IMR-90 (cell line): ENCODE measurements at regions of chr1 and their contacts with region 1.

Region 1: DNA sequence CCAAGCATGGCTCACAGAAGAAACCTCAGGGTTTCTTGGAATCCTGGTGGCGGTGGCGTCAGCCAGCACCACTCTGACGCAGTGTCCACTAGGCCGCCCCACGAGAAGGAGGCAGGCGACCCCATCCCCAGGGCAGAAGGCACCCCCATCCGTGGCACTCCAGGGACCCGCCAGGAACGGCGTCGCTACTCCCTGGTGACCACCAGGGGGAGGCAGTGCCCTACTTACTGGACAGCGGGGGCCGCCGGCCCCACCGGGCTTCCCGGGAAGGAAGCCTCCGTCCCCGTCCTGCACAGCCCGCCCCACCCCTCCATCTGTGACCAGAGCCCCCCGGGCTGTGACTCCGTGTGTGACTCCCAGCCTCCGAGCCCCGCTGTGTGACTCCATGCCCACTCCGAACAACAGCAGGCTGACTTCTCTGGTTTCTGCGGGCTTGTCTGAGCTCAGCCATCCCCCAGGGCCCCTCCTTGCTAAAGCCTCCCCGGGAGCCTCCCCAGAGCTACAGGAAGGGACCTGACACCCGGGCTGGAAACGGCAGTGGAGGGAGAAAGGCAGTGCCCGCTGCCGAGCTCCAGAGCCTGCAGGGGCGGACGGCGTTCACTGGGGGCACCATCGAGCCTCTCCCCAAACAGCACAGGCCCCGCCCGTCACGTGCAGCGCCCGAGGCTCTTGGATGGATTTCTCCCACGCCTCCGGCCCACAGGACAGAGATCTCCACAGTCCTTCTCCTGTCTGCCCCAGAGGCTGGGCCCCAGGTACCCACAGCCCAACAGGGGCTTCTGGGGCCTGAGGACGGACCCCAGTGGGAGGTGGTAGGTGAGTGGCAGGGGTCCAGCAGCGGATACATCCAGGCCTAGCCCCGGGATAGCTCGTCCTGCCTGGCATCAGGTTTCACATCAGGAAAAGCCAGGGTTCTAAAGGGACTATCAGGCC is 21.1 kb downstream of the KIF17 start:
- DNase-seq: peak; percentile 94
- ATAC-seq: peak; percentile 92
- H3K4me3 ChIP-seq: peak overlapping the region; percentile 52
- H3K27ac ChIP-seq: peak overlapping the region; percentile 88
- H3K4me1 ChIP-seq: peaks cover 14% of the 10 kb centered on the region
- H3K27me3 ChIP-seq: no peaks in the 10 kb centered on the region
- CTCF ChIP-seq: peak; percentile 82
- POLR2A ChIP-seq: no peak
- RAD21 ChIP-seq: peak; percentile 88

Region 2: DNA sequence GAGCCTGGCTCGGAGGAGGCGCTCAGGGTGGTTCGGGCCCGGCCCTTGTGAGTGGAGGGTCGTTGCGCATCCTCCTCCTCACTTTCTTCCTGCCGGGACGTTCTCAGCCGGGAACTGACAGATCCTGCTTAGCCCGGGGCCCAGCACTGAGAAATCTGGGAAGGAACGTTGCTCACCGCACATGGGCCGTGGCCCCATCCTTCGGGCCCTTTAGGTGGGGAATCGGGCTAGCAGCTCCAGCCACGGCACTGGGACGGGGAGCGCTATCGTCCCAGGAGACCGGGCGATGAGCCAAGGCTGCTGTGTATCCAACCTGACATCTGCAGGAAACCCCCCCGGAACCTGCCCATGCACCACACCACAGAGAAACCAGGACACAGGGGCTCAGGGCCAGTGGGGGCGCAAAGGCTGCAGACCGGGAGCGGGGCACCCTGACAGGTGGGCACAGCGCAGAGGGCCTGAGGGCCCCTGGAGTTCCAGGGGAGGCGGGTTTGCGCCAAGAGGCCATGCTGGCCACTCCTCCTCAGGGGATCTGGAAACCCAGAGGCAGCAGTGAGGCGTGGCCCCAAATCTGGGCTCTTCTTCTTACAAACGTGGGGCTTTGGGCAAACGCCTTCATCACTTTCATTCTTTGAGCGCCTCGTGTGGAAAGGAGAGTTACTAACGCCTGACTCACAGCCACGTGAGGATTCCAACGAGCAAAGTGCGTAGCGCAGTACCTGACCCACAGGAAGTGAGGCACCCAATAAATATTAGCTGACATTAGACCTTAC is 36.1 kb after region 1 on chr1 and contains the start of gene SH2D5:
- CTCF ChIA-PET with region 1: interaction called, 7 read pairs
- POLR2A ChIA-PET with region 1: no interaction called
- dilution Hi-C with region 1: no loop called
- in situ Hi-C with region 1: no loop called
- intact Hi-C with region 1: loop called (anchors 2 kb)
- DNase-seq: peak; percentile 99
- ATAC-seq: peak; percentile 69
- H3K4me3 ChIP-seq: peak within 1 kb of the TSS; percentile 60
- H3K27ac ChIP-seq: peak within 1 kb of the TSS; percentile 82
- H3K4me1 ChIP-seq: peaks cover 14% of the 10 kb centered on the region
- H3K27me3 ChIP-seq: no peaks in the 10 kb centered on the region
- CTCF ChIP-seq: peak; percentile 40
- POLR2A ChIP-seq: peak; percentile 47; the same call in 1 of the 2 replicates
- RAD21 ChIP-seq: peak; percentile 33
- total RNA-seq, gene SH2D5: 6.7 and 7.2 TPM in 2 replicates

Region 3: GRCh38 chr1:20786253-20787028 is 89.8 kb after region 1 on chr1:
- CTCF ChIA-PET with region 1: interaction called, 4 read pairs
- POLR2A ChIA-PET with region 1: no interaction called
- dilution Hi-C with region 1: no loop called
- in situ Hi-C with region 1: no loop called
- intact Hi-C with region 1: loop called (anchors 2 kb)
- DNase-seq: peak; percentile 92
- ATAC-seq: peak; percentile 87
- H3K4me3 ChIP-seq: peak overlapping the region; percentile 85
- H3K27ac ChIP-seq: peak overlapping the region; percentile 92
- H3K4me1 ChIP-seq: peaks cover 2% of the 10 kb centered on the region; the same call in 1 of the 2 replicates
- H3K27me3 ChIP-seq: no peaks in the 10 kb centered on the region
- CTCF ChIP-seq: 0 out of 2 replicates have a peak, but pooled peaks have one; percentile 0
- POLR2A ChIP-seq: no peak; the same call in none of the 2 replicates
- RAD21 ChIP-seq: peak; percentile 1; the same call in 1 of the 2 replicates

Region 4: GRCh38 chr1:21060523-21060922 is 363.9 kb after region 1 on chr1:
- CTCF ChIA-PET with region 1: interaction called, 11 read pairs
- POLR2A ChIA-PET with region 1: no interaction called
- dilution Hi-C with region 1: no loop called
- in situ Hi-C with region 1: no loop called
- intact Hi-C with region 1: no loop called
- DNase-seq: no peak
- ATAC-seq: no peak
- H3K4me3 ChIP-seq: no peak overlapping the region
- H3K27ac ChIP-seq: no peak overlapping the region
- H3K4me1 ChIP-seq: peaks cover 2% of the 10 kb centered on the region; the same call in 1 of the 2 replicates
- H3K27me3 ChIP-seq: no peaks in the 10 kb centered on the region
- CTCF ChIP-seq: no peak
- POLR2A ChIP-seq: no peak
- RAD21 ChIP-seq: no peak

Region 5: DNA sequence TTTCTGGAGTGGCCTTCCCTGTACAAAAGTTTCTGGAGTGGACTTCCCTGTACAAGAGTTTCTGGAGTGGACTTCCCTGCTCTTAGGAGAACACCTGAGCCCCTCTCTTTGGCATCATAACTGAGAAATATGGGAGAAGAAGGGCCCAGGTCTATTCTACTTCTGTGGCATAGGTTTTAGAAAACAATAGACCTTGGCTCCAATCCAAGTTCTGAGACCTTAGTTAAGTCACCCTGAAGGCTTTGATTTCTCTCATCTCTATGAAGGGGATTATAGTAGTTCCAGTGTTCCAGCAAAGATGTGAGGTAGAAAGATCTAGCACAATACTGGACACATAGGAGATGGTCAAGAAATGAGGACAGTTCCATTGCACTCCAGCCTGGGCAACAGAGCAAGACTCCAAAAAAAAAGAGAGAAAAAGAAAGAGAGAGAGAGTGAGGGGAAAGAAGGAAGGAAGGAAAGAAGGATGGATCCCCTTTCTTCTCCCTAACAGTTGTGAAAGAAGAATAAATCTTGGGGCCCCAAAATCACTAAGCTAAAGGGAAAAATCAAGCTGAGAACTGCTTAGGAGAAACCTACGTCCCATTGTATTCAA is 493.3 kb after region 1 on chr1:
- CTCF ChIA-PET with region 1: interaction called, 17 read pairs
- POLR2A ChIA-PET with region 1: no interaction called
- dilution Hi-C with region 1: no loop called
- in situ Hi-C with region 1: loop called (anchors 5 kb)
- intact Hi-C with region 1: loop called (anchors 1 kb)
- DNase-seq: no peak
- ATAC-seq: no peak
- H3K4me3 ChIP-seq: no peak overlapping the region
- H3K27ac ChIP-seq: no peak overlapping the region
- H3K4me1 ChIP-seq: 0 out of 2 replicates have a peak, but pooled peaks cover 2% of the 10 kb centered on the region
- H3K27me3 ChIP-seq: no peaks in the 10 kb centered on the region
- CTCF ChIP-seq: no peak
- POLR2A ChIP-seq: no peak
- RAD21 ChIP-seq: no peak

Region 6: DNA sequence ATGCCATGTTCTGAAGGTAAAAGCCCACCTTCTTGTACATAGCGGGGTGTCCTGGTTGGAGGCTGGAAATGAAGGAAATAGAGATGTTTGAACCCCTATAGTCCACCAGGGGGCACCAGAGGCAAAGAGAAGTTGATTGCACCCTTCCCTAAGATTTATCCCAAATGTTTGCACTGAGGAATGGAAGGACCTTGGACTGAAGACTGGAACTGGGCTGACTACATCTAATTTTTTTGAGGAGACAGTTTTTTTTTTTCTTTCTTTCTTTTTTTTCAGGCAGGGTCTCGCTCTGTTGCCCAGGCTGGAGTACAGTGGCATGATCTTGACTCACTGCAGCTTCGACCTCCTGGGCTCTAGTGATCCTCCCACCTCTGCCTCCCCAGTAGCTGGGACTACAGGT is 535.4 kb after region 1 on chr1:
- CTCF ChIA-PET with region 1: no interaction called
- POLR2A ChIA-PET with region 1: no interaction called
- dilution Hi-C with region 1: no loop called
- in situ Hi-C with region 1: no loop called
- intact Hi-C with region 1: loop called (anchors 1 kb)
- DNase-seq: peak; percentile 66
- ATAC-seq: peak; percentile 86
- H3K4me3 ChIP-seq: no peak overlapping the region
- H3K27ac ChIP-seq: no peak overlapping the region
- H3K4me1 ChIP-seq: peaks cover 3% of the 10 kb centered on the region; the same call in 1 of the 2 replicates
- H3K27me3 ChIP-seq: no peaks in the 10 kb centered on the region
- CTCF ChIP-seq: peak; percentile 74
- POLR2A ChIP-seq: no peak
- RAD21 ChIP-seq: peak; percentile 88

Region 7: DNA sequence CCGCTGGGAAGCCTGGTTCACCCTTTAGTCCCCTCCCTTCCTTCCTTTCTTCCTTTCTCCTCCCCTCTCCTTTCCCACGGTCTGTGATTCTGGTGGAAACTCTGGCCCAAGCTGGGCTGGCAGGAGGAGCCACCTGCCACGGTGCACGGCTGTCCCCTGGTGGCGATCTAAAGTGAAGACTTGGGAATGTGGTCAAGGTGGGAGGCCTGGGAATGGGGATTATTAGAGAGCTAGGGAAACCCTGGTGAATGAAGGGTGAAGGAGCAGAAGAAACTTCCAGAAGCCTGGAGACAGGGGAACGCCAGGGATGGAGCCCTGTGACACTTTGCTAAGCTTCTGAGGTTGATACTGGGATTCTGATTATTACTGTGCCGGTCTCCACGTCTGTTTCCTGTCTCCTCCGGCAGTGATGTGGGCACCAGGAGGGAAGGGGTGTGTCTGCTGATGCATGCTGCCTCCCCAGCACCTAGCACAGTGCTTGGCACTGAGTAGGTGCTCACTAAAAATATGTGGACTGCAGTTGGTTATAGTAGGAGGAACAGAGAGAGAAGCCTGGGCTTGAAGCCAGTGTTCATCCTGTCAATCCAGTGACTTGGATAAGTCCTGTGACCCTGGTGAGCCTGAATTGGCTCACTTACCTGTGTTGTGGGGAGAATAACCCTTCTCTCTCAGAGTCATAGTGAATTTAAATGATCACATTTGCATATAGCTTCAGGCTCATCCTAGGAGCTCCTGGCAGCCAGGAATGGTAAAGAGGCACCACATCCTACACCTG is 672.0 kb after region 1 on chr1:
- CTCF ChIA-PET with region 1: interaction called, 4 read pairs
- POLR2A ChIA-PET with region 1: no interaction called
- dilution Hi-C with region 1: no loop called
- in situ Hi-C with region 1: loop called (anchors 25 kb)
- intact Hi-C with region 1: loop called (anchors 5 kb)
- DNase-seq: peak; percentile 84
- ATAC-seq: peak; percentile 96
- H3K4me3 ChIP-seq: no peak overlapping the region
- H3K27ac ChIP-seq: no peak overlapping the region
- H3K4me1 ChIP-seq: no peaks in the 10 kb centered on the region
- H3K27me3 ChIP-seq: no peaks in the 10 kb centered on the region
- CTCF ChIP-seq: peak; percentile 99
- POLR2A ChIP-seq: peak; percentile 78
- RAD21 ChIP-seq: peak; percentile 100